Activated CD4-positive, alpha-beta T cell treated with anti-CD3 and anti-CD28 coated beads for 36 hours (primary cell): ENCODE measurements at regions of chr3 and their contacts with region 1.

Region 1: GRCh38 chr3:177795859-177796258 is 598.6 kb upstream of the TBL1XR1 start:
- DNase-seq: no peak
- ATAC-seq: peak; percentile 79
- H3K4me3 Mint-ChIP-seq: no peak overlapping the region
- H3K27ac Mint-ChIP-seq: peak overlapping the region; percentile 60
- H3K4me1 Mint-ChIP-seq: peaks cover 31% of the 10 kb centered on the region
- H3K27me3 Mint-ChIP-seq: no peaks in the 10 kb centered on the region

Region 2: DNA sequence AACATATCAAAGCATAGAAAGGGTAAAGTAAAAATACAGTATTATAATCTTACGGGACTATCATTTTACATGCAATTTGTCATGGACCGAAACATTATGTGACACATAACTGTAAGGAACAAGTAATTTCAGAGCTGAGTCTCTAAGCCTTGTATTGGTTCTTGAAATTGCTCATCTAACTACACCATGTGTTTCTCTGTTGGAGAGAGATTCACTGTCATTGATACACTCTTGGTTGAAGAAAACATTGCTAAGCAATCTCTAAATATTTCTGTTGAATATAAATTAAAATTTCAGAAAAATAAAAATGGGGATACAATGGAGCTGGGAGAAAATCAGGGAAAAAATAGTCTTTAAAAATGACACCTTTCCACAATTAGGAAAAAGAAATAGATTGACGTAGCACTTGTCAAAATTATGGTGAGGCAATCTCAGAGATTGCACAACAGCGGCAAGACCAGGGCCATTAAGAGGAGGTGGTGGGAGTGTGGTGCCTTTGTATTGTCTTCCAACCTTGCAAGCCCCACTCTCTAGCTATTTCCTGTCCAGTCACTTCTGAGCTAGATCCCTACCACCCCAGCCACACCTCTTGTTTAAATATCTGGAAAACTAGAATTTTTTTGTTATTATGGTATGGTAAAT is 47.4 kb after region 1 on chr3:
- CTCF ChIA-PET with region 1: no interaction called
- POLR2A ChIA-PET with region 1: interaction called, 3 read pairs
- intact Hi-C with region 1: loop called in 1 of 2 experiments (anchors 5 kb)
- DNase-seq: no peak
- ATAC-seq: peak; percentile 91
- H3K4me3 Mint-ChIP-seq: no peak overlapping the region
- H3K27ac Mint-ChIP-seq: no peak overlapping the region
- H3K4me1 Mint-ChIP-seq: no peaks in the 10 kb centered on the region
- H3K27me3 Mint-ChIP-seq: no peaks in the 10 kb centered on the region